Tibial artery (tissue), 4 donors: ENCODE measurements at regions of chr12 and their contacts with region 1.

Region 1: DNA sequence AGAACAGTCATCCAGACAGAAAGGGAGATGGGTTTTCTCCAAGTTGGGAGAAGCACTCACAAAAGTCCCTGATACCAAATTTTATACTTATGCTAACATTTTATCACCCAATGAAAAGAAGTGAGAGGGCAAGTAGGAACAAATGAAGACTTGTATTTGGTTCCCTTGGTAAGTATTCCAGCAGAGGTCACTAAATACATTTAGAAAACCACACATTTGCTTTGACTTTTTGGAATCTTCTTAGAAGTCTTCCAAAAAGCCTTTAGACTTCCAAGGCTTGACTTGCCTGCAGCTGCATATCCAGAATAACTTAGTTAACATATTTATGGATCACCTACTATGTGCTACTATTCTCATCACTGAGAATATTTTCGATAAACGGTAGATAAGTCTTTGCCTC is 3.1 kb upstream of the GYS2 start:
- DNase-seq: no peak
- H3K4me3 ChIP-seq: no peak overlapping the region
- H3K27ac ChIP-seq: no peak overlapping the region
- H3K4me1 ChIP-seq: no peaks in the 10 kb centered on the region
- H3K27me3 ChIP-seq: no peaks in the 10 kb centered on the region
- CTCF ChIP-seq: peak; percentile 9 to 33

Region 2: DNA sequence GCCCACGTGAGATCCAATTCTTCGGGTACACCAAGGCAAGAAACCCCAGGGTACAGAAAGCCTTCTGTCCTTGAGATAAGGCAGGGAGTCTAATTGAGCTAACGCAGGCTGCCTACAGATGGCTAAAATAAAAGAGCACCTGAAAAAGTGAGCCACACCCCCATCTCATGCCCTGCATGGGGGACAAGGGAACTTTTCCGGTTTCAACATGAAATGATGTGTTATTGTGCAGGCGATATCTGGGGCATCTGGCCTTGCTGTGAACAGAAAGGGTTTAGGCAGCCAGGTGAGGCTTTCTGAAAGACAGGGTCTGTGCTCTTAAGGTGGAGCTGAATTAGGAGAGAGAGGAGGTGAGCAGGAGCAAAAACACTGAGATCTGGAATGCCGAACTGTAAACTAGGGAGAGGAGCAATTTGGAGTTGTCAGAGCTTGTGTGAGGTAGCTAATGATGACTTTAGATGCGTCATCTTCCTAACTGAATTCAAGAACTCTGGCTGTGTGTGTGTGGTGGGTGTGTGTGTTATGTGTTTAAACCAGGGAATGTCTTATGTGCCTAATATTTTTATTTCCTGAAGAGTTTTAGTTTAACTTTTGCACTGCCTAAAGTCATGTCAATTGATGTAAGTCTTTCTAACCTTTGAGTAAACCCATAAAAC is 70.0 kb after region 1 on chr12:
- intact Hi-C with region 1: loop called (anchors 2 kb)
- DNase-seq: no peak
- H3K4me3 ChIP-seq: no peak overlapping the region
- H3K27ac ChIP-seq: no peak overlapping the region
- H3K4me1 ChIP-seq: peaks cover 0 to 3% (median 1%) of the 10 kb centered on the region in 4 donors
- H3K27me3 ChIP-seq: peaks cover 0 to 7% of the 10 kb centered on the region in 2 donors
- CTCF ChIP-seq: no peak